Aorta (tissue), 5 donors: ENCODE measurements at regions of chr15 and their contacts with region 1.

Region 1: DNA sequence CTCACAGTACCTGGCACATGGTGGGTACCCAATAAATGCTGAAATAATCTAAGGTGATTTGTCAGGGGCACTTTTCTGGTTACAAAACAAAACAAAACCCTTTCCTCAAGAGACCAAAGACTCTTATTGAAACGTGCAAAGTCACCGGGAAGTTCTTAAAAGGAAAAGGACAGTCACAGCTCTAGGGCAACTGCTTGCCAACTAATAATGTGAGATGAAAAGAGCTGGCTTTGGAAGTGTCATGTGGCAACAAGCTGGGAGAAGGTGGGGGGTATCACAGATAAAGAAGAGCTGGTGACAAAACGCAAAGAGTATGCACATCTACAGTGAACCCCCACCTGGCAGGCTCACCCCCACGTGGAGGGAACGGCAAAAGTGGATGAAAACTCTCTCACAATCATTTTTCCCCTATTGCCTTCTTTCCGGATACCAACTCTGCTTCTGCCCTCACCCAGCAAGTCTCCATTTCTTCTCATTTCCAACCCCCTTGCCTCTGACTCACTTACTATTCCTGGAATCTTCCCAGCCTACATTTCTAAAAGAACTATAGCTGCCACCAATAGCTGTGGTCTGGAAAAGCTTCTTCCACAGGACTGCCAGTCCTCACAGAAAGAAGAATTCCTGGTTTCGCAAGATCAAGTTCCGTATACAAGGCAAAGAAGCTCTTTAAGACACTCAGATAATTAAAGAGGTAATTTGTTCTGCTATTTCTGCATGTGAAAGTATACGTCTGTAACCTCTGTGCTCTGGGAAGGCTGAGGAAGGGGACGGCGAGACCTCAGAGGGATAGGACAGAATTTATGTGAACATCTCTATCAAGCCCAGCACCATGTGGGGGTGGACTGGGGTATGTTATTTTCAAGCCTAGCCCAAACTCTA is 21.8 kb upstream of the ANPEP start:
- DNase-seq: no peak
- ATAC-seq: peak; percentile 70
- H3K4me3 ChIP-seq: no peak overlapping the region
- H3K27ac ChIP-seq: peak overlapping the region; percentile 83 to 88
- H3K4me1 ChIP-seq: peaks cover 2 to 3% of the 10 kb centered on the region in 2 donors
- H3K27me3 ChIP-seq: no peaks in the 10 kb centered on the region

Region 2: GRCh38 chr15:89673165-89673512 is 163.4 kb before region 1 on chr15:
- intact Hi-C with region 1: no loop called
- DNase-seq: no peak
- ATAC-seq: no peak
- H3K4me3 ChIP-seq: no peak overlapping the region
- H3K27ac ChIP-seq: peak overlapping the region; percentile 34 to 76
- H3K4me1 ChIP-seq: peaks cover 0 to 4% of the 10 kb centered on the region in 2 donors
- H3K27me3 ChIP-seq: no peaks in the 10 kb centered on the region

Region 3: GRCh38 chr15:89750560-89751542 is 85.6 kb before region 1 on chr15 and contains the start of gene MESP1:
- intact Hi-C with region 1: loop called in 1 of 2 experiments (anchors 5 kb)
- DNase-seq: peak; percentile 94 to 98
- ATAC-seq: peak; percentile 94
- H3K4me3 ChIP-seq: peak within 1 kb of the TSS; percentile 27 to 64
- H3K27ac ChIP-seq: no peak within 1 kb of the TSS
- H3K4me1 ChIP-seq: no peaks in the 10 kb centered on the region
- H3K27me3 ChIP-seq: no peaks in the 10 kb centered on the region
- total RNA-seq, gene MESP1: 0.63 to 1.2 TPM

Region 4: DNA sequence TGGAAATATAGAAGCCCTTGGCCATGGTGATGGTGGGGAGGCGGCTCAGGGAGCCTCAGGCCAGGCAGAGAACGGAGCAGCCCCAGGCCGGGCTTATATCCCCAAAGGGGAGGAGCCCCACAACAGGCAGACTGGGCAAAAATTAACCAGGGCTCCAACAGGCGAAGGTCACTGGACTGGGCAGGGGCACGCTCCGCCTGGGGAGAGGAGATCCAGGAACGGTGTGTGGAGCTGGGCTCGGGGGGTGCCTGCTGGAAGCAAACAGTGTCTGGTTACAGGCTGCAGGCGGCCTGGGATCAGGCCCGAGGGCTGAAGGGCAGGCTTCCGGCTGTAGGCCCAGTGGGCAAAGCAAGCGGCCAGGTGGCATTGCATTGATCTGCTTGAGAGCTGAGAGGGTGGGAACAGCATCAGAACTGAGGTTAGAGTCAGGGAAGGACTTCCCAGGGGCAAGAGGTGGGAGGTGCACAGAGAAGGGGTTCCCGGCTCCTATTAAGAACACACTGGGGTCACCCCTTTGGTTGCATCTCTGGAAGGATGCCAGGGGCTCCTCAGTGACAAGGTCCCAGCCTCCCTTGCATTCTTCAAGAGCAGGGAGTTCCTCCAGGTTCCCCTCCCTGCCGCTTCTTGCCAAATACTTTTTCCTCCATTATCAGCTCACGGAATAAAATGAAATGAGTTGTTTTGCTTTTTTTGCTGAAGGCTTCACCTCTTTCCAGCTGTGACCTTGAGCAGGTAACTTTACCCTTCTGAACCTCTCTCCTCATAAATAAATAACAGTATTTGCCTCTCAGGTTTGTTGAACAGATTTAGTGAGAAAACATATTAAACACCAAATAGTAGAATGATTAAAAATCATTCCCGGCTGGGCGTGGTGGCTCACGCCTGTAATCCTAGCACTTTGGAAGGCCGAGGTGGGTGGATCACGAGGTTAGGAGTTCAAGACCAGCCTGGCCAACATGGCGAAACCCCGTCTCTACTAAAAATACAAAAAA is 29.6 kb before region 1 on chr15:
- intact Hi-C with region 1: no loop called
- DNase-seq: peak; percentile 43 to 64
- ATAC-seq: no peak
- H3K4me3 ChIP-seq: no peak overlapping the region
- H3K27ac ChIP-seq: no peak overlapping the region
- H3K4me1 ChIP-seq: no peaks in the 10 kb centered on the region
- H3K27me3 ChIP-seq: no peaks in the 10 kb centered on the region